Activated CD4-positive, alpha-beta memory T cell treated with anti-CD3 and anti-CD28 coated beads, Interleukin-2, amount 10 ng/mL, durations not matched to agents 7 days and 5 days (primary cell): ENCODE measurements at regions of chr7 and their contacts with region 1.

Region 1: DNA sequence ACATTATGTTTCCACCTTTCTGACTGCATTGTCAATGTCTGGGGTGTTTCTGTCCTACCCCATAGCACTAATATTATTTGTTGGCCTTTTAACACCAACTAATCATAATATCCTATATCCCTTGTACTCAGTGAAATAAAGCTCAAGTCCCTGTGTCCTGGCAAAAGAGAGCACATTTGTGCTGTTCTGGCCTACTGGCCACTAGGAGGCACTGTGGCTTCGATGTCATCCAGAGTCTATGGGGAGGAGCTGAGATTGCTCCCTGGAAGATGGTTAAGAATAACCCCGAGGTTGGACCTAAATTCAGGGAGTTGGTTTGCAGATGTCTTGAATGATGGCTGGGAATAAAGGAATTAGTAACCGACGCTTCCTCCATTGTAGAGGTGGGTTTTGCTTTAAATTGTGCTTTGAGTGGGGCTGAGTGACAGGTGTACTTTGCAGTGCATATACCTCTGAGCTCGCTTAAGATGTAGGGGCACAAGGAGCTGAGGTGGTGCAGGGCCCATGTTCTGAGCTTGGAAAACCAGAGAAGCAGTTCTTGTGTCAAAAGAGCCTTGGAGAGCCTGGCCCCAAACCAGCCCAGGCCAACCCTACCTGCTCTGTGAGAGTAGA is 191.2 kb upstream of the PRSS1 start:
- DNase-seq: peak; percentile 58
- H3K4me3 Mint-ChIP-seq: peak overlapping the region; percentile 31
- H3K27ac Mint-ChIP-seq: no peak overlapping the region
- H3K4me1 Mint-ChIP-seq: peaks cover 35% of the 10 kb centered on the region
- H3K27me3 Mint-ChIP-seq: peaks cover 6% of the 10 kb centered on the region

Region 2: GRCh38 chr7:142571581-142571980 is 13.5 kb after region 1 on chr7:
- CTCF ChIA-PET with region 1: interaction called, 11 read pairs
- POLR2A ChIA-PET with region 1: no interaction called
- DNase-seq: no peak
- H3K4me3 Mint-ChIP-seq: no peak overlapping the region
- H3K27ac Mint-ChIP-seq: no peak overlapping the region
- H3K4me1 Mint-ChIP-seq: peaks cover 12% of the 10 kb centered on the region
- H3K27me3 Mint-ChIP-seq: peaks cover 12% of the 10 kb centered on the region

Region 3: DNA sequence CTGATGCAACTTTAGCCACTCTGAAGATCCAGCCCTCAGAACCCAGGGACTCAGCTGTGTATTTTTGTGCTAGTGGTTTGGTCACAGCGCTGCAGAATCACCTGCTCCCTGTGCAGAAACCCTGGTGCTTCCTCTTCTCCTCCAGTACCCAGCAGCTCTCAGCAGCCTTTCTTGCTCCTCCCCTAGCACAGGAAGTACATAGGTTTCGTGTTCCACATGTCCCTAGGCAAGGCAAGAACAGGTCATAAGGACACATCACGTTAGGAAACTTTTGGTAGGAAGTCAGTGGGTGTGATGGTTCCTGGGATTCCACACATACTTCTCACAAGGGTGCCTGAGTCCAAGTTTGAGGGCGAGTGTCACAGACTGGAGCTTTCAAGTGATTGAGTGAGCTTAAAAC is 23.3 kb after region 1 on chr7:
- CTCF ChIA-PET with region 1: interaction called, 28 read pairs
- POLR2A ChIA-PET with region 1: interaction called, 3 read pairs
- DNase-seq: peak; percentile 42
- H3K4me3 Mint-ChIP-seq: peak overlapping the region; percentile 49
- H3K27ac Mint-ChIP-seq: peak overlapping the region; percentile 73
- H3K4me1 Mint-ChIP-seq: peaks cover 38% of the 10 kb centered on the region
- H3K27me3 Mint-ChIP-seq: no peaks in the 10 kb centered on the region

Region 4: GRCh38 chr7:142587578-142588191 is 29.6 kb after region 1 on chr7:
- CTCF ChIA-PET with region 1: interaction called, 28 read pairs
- POLR2A ChIA-PET with region 1: interaction called, 4 read pairs
- DNase-seq: no peak
- H3K4me3 Mint-ChIP-seq: peak overlapping the region; percentile 28
- H3K27ac Mint-ChIP-seq: peak overlapping the region; percentile 55
- H3K4me1 Mint-ChIP-seq: peaks cover 12% of the 10 kb centered on the region
- H3K27me3 Mint-ChIP-seq: no peaks in the 10 kb centered on the region